WTC11 (cell line): ENCODE measurements at regions of chr12 and their contacts with region 1.

Region 1: GRCh38 chr12:120879102-120879501 is 25.1 kb downstream of the SPPL3 start:
- DNase-seq: no peak
- ATAC-seq: no peak
- H3K4me3 Mint-ChIP-seq: no peak overlapping the region
- H3K27ac Mint-ChIP-seq: 0 out of 2 replicates have a peak overlapping the region, but pooled peaks have one; percentile 9
- H3K4me1 Mint-ChIP-seq: peaks cover 7% of the 10 kb centered on the region
- H3K27me3 Mint-ChIP-seq: no peaks in the 10 kb centered on the region
- CTCF ChIP-seq: no peak

Region 2: GRCh38 chr12:120820885-120821510 is 58.1 kb before region 1 on chr12:
- CTCF ChIA-PET with region 1: no interaction called
- POLR2A ChIA-PET with region 1: no interaction called
- DNase-seq: no peak
- ATAC-seq: no peak
- H3K4me3 Mint-ChIP-seq: no peak overlapping the region
- H3K27ac Mint-ChIP-seq: 0 out of 2 replicates have a peak overlapping the region, but pooled peaks have one; percentile 47
- H3K4me1 Mint-ChIP-seq: peaks cover 31% of the 10 kb centered on the region
- H3K27me3 Mint-ChIP-seq: no peaks in the 10 kb centered on the region
- CTCF ChIP-seq: no peak

Region 3: GRCh38 chr12:120847392-120847791 is 31.7 kb before region 1 on chr12:
- CTCF ChIA-PET with region 1: no interaction called
- POLR2A ChIA-PET with region 1: no interaction called
- DNase-seq: no peak
- ATAC-seq: no peak
- H3K4me3 Mint-ChIP-seq: no peak overlapping the region
- H3K27ac Mint-ChIP-seq: no peak overlapping the region
- H3K4me1 Mint-ChIP-seq: peaks cover 18% of the 10 kb centered on the region
- H3K27me3 Mint-ChIP-seq: no peaks in the 10 kb centered on the region
- CTCF ChIP-seq: no peak

Region 4: DNA sequence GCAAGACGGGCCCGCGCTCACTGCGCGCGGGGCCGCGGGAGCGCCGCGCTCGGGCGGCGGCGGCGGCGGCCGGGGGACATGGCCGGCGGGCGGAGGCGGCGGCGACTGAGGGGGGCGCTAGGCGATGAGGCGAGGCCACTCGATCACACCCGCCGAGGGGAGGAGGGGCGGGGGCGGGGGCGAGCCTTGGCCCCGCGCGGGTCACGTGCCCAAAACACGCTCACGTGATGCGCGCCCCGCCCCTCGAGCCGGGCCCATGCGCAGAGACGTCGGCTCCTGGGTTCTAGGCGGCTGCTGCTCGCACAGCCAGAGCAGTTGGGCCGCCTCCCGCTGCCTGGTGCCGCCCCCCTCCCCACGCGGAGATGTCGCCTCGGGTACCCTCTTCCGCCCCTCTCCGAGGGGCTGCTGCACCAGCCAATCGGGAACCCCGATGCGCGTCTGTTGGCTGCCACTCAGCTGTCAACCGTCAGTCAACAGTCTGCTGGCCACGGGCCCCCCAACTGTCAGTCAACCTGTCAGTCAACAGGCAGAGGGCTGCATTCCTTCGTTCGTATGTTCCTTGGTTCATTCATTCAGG is 25.2 kb after region 1 on chr12 and contains the start of gene SPPL3:
- CTCF ChIA-PET with region 1: no interaction called
- POLR2A ChIA-PET with region 1: interaction called, 12 read pairs
- DNase-seq: peak; percentile 94
- ATAC-seq: peak; percentile 91
- H3K4me3 Mint-ChIP-seq: peak within 1 kb of the TSS; percentile 99
- H3K27ac Mint-ChIP-seq: peak within 1 kb of the TSS; percentile 86
- H3K4me1 Mint-ChIP-seq: peaks cover 22% of the 10 kb centered on the region
- H3K27me3 Mint-ChIP-seq: no peaks in the 10 kb centered on the region
- CTCF ChIP-seq: no peak
- total RNA-seq, gene SPPL3: 32.5 to 35.5 TPM (median 33.8 TPM) in 3 replicates